Posterior vena cava (tissue), 2 donors: ENCODE measurements at regions of chr11 and their contacts with region 1.

Region 1: DNA sequence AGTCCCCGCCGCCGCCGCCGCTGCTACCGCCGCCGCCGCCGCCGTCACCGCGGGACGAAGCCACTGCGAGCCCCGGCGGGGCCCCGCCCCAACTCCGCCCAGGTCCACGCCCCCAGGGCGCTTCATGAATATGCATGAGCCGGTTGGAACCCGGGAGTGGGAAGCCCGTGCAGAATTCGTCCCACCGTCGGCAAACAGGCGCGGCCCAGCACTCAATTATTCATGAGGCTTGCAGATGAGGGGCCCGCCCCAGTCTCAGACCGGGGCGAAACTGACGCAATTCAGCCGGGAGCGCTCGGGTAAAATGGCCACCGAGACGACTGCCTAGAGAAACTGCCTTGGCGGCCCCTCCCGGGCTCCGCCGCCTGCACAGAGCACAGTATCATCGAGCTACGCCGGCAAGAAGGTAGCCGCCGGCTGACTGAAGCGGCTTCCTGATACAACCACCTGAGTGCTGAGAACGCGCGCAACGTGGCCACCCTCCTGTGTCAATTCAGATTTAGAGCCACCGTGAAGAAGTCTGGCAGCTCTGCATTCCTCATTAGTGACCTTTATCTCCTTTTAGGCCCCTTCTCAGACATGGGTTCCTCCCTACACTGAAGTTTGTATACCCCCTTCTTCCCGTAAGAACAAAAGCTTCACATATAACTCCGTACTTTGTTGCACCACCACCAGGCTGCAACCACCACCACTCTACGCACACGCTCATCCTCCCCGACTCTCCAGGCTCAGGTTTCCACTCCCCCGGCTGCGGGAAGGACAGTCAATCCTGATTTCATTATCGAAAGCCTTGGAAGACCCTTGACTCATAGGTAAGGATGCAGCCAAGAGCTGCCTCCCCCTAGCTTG is at the start of gene TNKS1BP1:
- DNase-seq: peak; percentile 99
- total RNA-seq, gene TNKS1BP1: 175 to 185 TPM

Region 2: GRCh38 chr11:57406337-57406904 is 81.3 kb after region 1 on chr11:
- intact Hi-C with region 1: no loop called
- DNase-seq: peak; percentile 81

Region 3: GRCh38 chr11:57667736-57668435 is 342.8 kb after region 1 on chr11 and contains the start of gene ZDHHC5:
- intact Hi-C with region 1: loop called in 1 of 2 experiments (anchors 10 kb)
- DNase-seq: peak; percentile 100
- total RNA-seq, gene ZDHHC5: 49.7 to 58.0 TPM

Region 4: DNA sequence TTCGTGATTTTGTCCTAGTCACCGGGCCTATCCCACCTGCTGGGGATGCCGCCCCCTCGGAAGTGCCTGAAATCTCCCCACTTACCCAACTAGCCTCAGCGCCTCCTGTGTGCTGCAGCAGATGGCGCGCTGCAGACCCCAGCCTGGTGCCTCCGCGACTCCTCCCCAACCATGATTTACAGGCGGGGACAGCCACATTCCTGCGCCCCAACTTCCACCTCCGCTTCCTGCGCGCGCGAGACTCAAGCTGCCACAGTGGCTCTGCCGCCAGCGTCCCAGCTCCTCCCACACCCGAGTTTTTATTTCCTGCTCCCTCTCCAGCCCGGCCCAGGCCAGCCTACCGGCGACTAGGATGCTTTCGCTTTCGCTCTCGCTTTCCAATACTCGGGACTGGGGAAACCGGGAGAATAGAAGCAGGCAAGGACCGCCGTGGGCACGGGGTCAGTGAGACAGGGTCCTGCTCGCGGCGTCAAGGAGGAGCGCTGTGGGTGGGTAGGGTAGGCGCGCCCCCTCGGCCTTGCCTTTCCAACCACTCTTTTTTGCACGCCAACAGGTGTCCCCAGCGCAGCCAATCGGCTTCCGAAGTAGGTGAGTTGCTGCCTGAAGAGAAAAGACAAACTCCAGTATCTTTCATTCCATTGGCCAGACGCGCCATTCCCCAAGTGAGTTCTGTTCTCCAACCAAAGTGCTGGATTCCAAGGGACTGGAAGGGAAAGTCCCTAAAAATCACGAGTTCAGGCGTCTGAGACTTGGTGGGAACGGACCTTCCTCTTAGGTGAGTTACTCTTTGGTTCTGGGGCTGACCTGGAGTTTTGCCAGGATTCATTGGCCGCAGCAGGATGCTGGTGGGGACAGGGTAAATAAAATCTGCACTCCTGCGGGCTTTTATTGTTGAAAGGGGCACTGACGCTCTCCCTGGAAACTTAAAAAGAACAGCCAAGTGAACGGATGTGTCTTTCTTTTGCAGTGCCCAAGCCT is 1817.7 kb after region 1 on chr11 and contains the start of gene FAM111A:
- intact Hi-C with region 1: loop called in 1 of 2 experiments (anchors 5 kb)
- DNase-seq: peak; percentile 96
- total RNA-seq, gene FAM111A: 15.5 to 23.6 TPM